ENCODE measurements at regions of chr11 and their contacts with region 1.

Region 1: GRCh38 chr11:95150946-95151684 is 61.5 kb downstream of the ENDOD1 start:
- DNase-seq: peak; percentile 96
- H3K4me3 Mint-ChIP-seq: peak overlapping the region; percentile 85
- H3K27ac Mint-ChIP-seq: peak overlapping the region; percentile 89
- H3K4me1 Mint-ChIP-seq: peaks cover 36% of the 10 kb centered on the region
- H3K27me3 Mint-ChIP-seq: peaks cover 5% of the 10 kb centered on the region

Region 2: DNA sequence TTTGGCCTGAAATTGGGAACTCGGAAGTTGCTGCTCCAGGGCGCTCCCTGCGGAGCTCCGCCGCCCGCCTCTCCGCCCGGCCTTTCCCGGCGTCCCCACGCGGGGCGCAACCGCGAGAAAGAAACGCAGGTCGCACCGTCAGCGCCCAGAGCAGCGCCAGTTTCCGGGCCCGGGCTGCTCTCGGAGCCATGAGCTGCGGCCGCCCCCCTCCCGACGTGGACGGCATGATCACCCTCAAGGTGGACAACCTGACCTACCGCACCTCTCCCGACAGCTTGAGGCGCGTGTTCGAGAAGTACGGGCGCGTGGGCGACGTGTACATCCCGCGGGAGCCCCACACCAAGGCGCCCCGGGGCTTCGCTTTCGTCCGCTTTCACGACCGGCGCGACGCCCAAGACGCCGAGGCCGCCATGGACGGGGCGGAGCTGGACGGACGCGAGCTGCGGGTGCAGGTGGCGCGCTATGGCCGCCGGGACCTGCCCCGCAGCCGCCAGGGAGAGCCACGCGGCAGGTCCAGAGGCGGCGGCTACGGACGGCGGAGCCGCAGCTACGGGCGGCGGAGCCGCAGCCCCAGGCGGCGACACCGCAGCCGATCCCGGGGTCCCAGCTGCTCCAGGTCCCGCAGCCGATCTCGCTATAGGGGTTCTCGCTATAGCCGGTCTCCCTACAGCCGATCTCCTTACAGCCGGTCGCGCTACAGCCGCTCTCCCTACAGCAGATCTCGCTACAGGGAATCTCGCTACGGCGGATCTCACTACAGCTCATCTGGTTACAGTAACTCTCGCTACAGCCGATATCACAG is 83.9 kb before region 1 on chr11:
- CTCF ChIA-PET with region 1: interaction called, 80 read pairs
- intact Hi-C with region 1: loop called (anchors 1 kb)
- DNase-seq: peak; percentile 82
- H3K4me3 Mint-ChIP-seq: peak overlapping the region; percentile 91
- H3K27ac Mint-ChIP-seq: peak overlapping the region; percentile 96
- H3K4me1 Mint-ChIP-seq: peaks cover 23% of the 10 kb centered on the region
- H3K27me3 Mint-ChIP-seq: no peaks in the 10 kb centered on the region

Region 3: GRCh38 chr11:95337175-95337957 is 186.3 kb after region 1 on chr11:
- CTCF ChIA-PET with region 1: interaction called, 5 read pairs
- intact Hi-C with region 1: loop called (anchors 2 kb)
- DNase-seq: peak; percentile 69
- H3K4me3 Mint-ChIP-seq: no peak overlapping the region
- H3K27ac Mint-ChIP-seq: no peak overlapping the region
- H3K4me1 Mint-ChIP-seq: peaks cover 4% of the 10 kb centered on the region
- H3K27me3 Mint-ChIP-seq: no peaks in the 10 kb centered on the region

Region 4: GRCh38 chr11:95715777-95716241 is 564.7 kb after region 1 on chr11:
- CTCF ChIA-PET with region 1: interaction called, 281 read pairs
- intact Hi-C with region 1: no loop called
- DNase-seq: peak; percentile 64
- H3K4me3 Mint-ChIP-seq: no peak overlapping the region
- H3K27ac Mint-ChIP-seq: no peak overlapping the region
- H3K4me1 Mint-ChIP-seq: peaks cover 54% of the 10 kb centered on the region
- H3K27me3 Mint-ChIP-seq: no peaks in the 10 kb centered on the region

Region 5: DNA sequence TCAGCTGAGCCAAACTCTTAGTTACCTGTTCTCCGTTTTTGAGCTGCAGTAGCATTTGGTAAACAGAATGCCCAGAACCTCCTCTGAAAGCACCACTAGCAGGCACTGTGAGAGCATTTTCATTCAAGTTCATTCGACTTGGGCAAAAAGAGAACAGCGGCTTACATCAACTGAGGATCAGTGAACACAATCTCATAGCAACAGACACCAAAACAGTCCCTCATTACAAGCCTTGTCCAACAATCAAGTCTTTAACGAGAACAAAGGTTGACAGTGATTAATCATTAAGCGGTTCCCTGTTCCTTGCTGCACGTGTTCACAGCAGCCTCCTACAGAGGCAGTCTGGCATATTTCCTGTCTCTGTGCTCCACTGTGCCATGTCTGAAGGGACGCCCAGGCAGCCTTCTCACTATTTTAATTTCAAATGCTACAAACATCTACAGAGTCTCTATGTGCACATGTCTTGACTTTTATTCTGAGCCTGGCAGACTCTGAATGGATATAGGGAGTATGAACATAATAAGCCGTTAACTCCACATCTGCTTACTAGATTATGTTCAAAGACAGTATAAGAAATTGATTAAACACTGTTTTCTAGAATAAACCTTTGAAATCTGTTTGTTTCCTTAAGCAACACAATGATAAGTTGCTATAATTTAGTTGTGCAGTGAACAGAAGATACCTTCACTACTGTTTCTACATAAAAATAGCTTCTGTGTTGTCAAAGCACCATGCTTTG is 861.1 kb after region 1 on chr11:
- CTCF ChIA-PET with region 1: no interaction called
- intact Hi-C with region 1: loop called (anchors 2 kb)
- DNase-seq: peak; percentile 67
- H3K4me3 Mint-ChIP-seq: peak overlapping the region; percentile 52
- H3K27ac Mint-ChIP-seq: peak overlapping the region; percentile 72
- H3K4me1 Mint-ChIP-seq: peaks cover 69% of the 10 kb centered on the region
- H3K27me3 Mint-ChIP-seq: no peaks in the 10 kb centered on the region

Measured in activated naive CD4-positive, alpha-beta T cell treated with anti-CD3 and anti-CD28 coated beads for 36 hours (primary cell).